Heart right ventricle (tissue), 16 donors: ENCODE measurements at regions of chr20 and their contacts with region 1.

Region 1: GRCh38 chr20:31881945-31882344 is 11.5 kb downstream of the TTLL9 start:
- DNase-seq: no peak
- ATAC-seq: no peak
- H3K4me3 ChIP-seq: no peak overlapping the region
- H3K27ac ChIP-seq: no peak overlapping the region
- H3K4me1 ChIP-seq: peaks cover 0 to 11% (median 0%) of the 10 kb centered on the region in 9 donors
- H3K27me3 ChIP-seq: no peaks in the 10 kb centered on the region
- CTCF ChIP-seq: no peak

Region 2: GRCh38 chr20:31943052-31943471 is 61.1 kb after region 1 on chr20:
- intact Hi-C with region 1: loop called in 1 of 10 experiments (anchors 10 kb)
- DNase-seq: peak; percentile 45 to 51
- ATAC-seq: peak; percentile 53 to 94 (median 84)
- H3K4me3 ChIP-seq: no peak overlapping the region
- H3K27ac ChIP-seq: peak overlapping the region in 7 of 10 donors; percentile 22 to 48 (median 33)
- H3K4me1 ChIP-seq: peaks cover 3 to 22% (median 12%) of the 10 kb centered on the region in 9 donors
- H3K27me3 ChIP-seq: no peaks in the 10 kb centered on the region
- CTCF ChIP-seq: no peak